PC-3 (cell line): ENCODE measurements at regions of chrX and their contacts with region 1.

Region 1: DNA sequence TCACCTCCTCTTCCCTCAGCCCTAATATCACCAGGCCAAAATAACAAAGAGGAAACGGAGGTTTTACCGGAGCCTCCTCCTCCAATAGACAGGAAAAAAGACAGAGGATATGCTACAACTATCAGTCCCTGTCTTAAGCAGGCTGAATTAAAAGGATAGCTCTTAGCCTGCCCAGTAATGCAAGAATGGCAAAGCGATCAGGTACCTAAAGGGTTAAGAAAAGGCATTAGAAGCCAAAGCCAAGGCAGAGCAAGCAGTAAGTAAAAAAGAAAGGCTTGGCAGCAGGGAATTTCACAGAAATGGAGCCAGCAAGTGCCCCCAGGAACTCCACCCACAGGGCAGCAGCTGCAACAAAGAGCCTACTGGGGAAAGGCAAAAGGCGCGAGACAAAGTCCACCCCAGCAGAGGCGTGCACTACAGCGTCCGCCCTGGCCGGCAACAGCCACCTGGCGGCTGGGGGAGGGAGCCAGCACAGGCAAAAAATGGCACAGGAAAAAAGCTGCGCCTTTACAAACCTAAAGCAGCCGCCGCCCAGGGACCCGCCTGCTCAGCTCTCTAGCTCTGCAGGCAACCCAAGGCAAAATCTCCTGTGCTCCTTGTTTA is 220.6 kb upstream of the ZC4H2 start:
- DNase-seq: peak; percentile 44
- ATAC-seq: peak; percentile 96
- H3K4me3 ChIP-seq: peak overlapping the region; percentile 50; the same call in 1 of the 2 replicates
- H3K27ac ChIP-seq: no peak overlapping the region
- H3K4me1 ChIP-seq: no peaks in the 10 kb centered on the region
- H3K27me3 ChIP-seq: no peaks in the 10 kb centered on the region
- CTCF ChIP-seq: peak; percentile 36; the same call in 1 of the 2 replicates

Region 2: GRCh38 chrX:65034668-65035445 is 162.0 kb before region 1 on chrX:
- CTCF ChIA-PET with region 1: no interaction called
- POLR2A ChIA-PET with region 1: interaction called, 3 read pairs
- intact Hi-C with region 1: loop called (anchors 1 kb)
- DNase-seq: peak; percentile 82
- ATAC-seq: peak; percentile 87
- H3K4me3 ChIP-seq: peak within 1 kb of the TSS; percentile 71
- H3K27ac ChIP-seq: no peak within 1 kb of the TSS
- H3K4me1 ChIP-seq: peaks cover 7% of the 10 kb centered on the region; the same call in 1 of the 2 replicates
- H3K27me3 ChIP-seq: no peaks in the 10 kb centered on the region
- CTCF ChIP-seq: peak; percentile 56

Region 3: DNA sequence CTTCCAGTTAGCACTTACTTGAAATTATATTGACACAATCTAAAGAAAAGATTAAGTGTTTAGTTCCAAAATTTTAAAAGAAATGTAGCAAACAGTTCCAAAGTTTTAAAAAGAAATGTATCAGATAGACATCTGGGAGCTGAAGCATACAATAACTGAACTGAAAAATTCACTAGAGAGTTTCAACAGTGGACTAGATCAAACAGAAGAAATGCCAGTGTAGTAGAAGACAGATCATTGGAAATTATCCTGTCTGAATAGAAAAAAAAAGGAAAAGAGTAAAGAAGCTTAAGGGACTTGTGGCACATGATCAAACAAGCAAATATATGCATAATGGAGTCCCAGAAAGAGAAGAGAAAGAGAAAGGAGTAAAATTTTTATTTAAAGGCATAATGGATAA is 76.3 kb after region 1 on chrX:
- CTCF ChIA-PET with region 1: no interaction called
- POLR2A ChIA-PET with region 1: no interaction called
- intact Hi-C with region 1: no loop called
- DNase-seq: no peak
- ATAC-seq: no peak
- H3K4me3 ChIP-seq: no peak overlapping the region
- H3K27ac ChIP-seq: no peak overlapping the region
- H3K4me1 ChIP-seq: no peaks in the 10 kb centered on the region
- H3K27me3 ChIP-seq: no peaks in the 10 kb centered on the region
- CTCF ChIP-seq: no peak

Region 4: GRCh38 chrX:66988331-66988730 is 1791.5 kb after region 1 on chrX:
- CTCF ChIA-PET with region 1: no interaction called
- POLR2A ChIA-PET with region 1: no interaction called
- intact Hi-C with region 1: no loop called
- DNase-seq: no peak
- ATAC-seq: no peak
- H3K4me3 ChIP-seq: no peak overlapping the region
- H3K27ac ChIP-seq: no peak overlapping the region
- H3K4me1 ChIP-seq: no peaks in the 10 kb centered on the region
- H3K27me3 ChIP-seq: no peaks in the 10 kb centered on the region
- CTCF ChIP-seq: no peak